ENCODE measurements at regions of chr7 and their contacts with region 1.

Region 1: DNA sequence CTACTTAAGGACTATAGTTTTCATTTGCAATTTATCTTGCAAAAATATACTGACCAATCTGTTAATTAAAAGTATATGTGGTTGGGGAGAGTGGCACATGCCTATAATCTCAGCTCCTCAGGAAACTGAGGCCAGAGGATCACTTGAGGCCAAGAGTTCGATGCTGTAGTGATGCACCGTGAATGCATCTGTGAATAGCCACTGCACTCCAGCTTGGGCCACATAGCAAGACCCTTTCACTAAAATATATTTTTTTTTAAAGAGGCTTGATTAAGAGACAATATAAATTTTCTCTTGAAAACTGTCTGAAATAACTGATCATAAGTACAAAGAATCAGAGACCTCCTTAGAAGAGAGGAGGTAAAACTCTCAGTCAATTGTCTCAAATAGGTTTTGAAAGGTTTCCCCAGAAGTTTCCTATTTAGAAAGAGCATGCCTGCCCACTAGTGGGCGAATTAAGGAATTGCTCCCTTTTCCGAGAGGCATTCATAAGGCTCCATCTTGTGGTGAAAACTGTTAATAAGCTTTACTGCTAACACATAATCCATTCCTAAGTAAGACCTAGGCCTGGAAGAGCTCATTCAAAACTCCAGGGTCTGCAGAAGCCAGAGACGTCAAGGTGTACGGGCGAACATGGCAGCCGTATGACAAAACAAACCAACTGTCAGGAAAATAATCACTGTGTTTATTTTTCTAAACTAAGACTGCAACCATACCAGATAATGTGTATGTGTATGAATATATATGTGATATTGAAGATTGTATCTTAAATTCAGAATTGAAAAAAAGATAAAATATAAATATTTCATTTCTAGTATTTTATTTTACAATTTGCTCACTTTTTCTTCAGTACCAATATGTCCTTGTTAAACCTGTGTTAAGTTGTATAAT is 6.8 kb upstream of the TAS2R40 start:
- DNase-seq: peak; percentile 71
- H3K4me3 ChIP-seq: no peak overlapping the region
- H3K27ac ChIP-seq: no peak overlapping the region
- H3K27me3 ChIP-seq: no peaks in the 10 kb centered on the region
- CTCF ChIP-seq: peak; percentile 100

Region 2: GRCh38 chr7:142992464-142992863 is 222.6 kb before region 1 on chr7:
- CTCF ChIA-PET with region 1: interaction called, 14 read pairs
- POLR2A ChIA-PET with region 1: no interaction called
- DNase-seq: no peak
- H3K4me3 ChIP-seq: no peak overlapping the region
- H3K27ac ChIP-seq: no peak overlapping the region
- H3K27me3 ChIP-seq: no peaks in the 10 kb centered on the region
- CTCF ChIP-seq: no peak

Region 3: GRCh38 chr7:143013893-143014292 is 201.1 kb before region 1 on chr7:
- CTCF ChIA-PET with region 1: interaction called, 406 read pairs
- POLR2A ChIA-PET with region 1: no interaction called
- DNase-seq: peak; percentile 16
- H3K4me3 ChIP-seq: no peak overlapping the region
- H3K27ac ChIP-seq: no peak overlapping the region
- H3K27me3 ChIP-seq: no peaks in the 10 kb centered on the region
- CTCF ChIP-seq: no peak

Region 4: GRCh38 chr7:143042159-143042789 is 172.8 kb before region 1 on chr7:
- CTCF ChIA-PET with region 1: interaction called, 12 read pairs
- POLR2A ChIA-PET with region 1: no interaction called
- DNase-seq: no peak
- H3K4me3 ChIP-seq: no peak overlapping the region
- H3K27ac ChIP-seq: no peak overlapping the region
- H3K27me3 ChIP-seq: no peaks in the 10 kb centered on the region
- CTCF ChIP-seq: no peak

Region 5: GRCh38 chr7:143203386-143203785 is 11.6 kb before region 1 on chr7:
- CTCF ChIA-PET with region 1: interaction called, 33 read pairs
- POLR2A ChIA-PET with region 1: no interaction called
- DNase-seq: no peak
- H3K4me3 ChIP-seq: no peak overlapping the region
- H3K27ac ChIP-seq: no peak overlapping the region
- H3K27me3 ChIP-seq: no peaks in the 10 kb centered on the region
- CTCF ChIP-seq: no peak

Region 6: GRCh38 chr7:143248761-143249354 is 33.8 kb after region 1 on chr7:
- CTCF ChIA-PET with region 1: interaction called, 16 read pairs
- POLR2A ChIA-PET with region 1: no interaction called
- DNase-seq: no peak
- H3K4me3 ChIP-seq: no peak overlapping the region
- H3K27ac ChIP-seq: no peak overlapping the region
- H3K27me3 ChIP-seq: peaks cover 7% of the 10 kb centered on the region
- CTCF ChIP-seq: no peak

Region 7: DNA sequence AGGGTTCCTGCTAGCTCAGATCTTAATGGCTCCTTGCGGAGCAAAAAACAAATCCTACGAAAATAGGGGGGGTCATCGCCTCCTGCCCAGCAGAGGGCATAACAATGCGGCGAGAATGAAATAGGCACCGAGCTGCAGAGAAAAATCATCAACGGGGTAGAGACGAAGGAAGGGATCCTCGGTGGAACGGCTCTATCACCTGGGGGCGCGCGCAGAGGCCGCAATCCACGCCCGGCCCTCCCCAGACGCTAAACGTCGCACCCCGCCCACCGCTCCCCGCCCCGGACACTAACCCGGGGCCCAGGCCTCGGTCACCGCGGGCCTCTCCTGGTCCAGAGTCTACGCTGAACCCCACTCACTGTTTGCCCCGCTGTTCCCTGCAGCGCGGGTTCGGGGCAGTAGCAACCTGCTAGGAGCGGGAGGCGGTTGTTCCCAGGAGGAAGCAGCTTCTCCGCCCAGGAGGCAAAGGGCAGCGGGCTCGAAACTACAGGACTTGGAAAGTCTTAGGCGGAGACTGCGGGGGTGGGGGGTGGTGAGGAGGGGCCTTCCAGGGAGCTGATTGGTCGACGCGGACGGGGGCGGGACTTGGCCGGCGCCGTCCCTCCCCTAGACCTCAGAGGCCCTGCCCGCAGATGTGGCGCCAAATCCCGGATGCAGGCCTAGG is 686.8 kb after region 1 on chr7 and contains the start of gene TCAF1:
- CTCF ChIA-PET with region 1: no interaction called
- POLR2A ChIA-PET with region 1: no interaction called
- DNase-seq: peak; percentile 85
- H3K4me3 ChIP-seq: peak within 1 kb of the TSS; percentile 85
- H3K27ac ChIP-seq: peak within 1 kb of the TSS; percentile 83
- H3K27me3 ChIP-seq: no peaks in the 10 kb centered on the region
- CTCF ChIP-seq: peak; percentile 45
- polyA plus RNA-seq, gene TCAF1: 57.0 and 61.3 TPM in 2 replicates

Region 8: DNA sequence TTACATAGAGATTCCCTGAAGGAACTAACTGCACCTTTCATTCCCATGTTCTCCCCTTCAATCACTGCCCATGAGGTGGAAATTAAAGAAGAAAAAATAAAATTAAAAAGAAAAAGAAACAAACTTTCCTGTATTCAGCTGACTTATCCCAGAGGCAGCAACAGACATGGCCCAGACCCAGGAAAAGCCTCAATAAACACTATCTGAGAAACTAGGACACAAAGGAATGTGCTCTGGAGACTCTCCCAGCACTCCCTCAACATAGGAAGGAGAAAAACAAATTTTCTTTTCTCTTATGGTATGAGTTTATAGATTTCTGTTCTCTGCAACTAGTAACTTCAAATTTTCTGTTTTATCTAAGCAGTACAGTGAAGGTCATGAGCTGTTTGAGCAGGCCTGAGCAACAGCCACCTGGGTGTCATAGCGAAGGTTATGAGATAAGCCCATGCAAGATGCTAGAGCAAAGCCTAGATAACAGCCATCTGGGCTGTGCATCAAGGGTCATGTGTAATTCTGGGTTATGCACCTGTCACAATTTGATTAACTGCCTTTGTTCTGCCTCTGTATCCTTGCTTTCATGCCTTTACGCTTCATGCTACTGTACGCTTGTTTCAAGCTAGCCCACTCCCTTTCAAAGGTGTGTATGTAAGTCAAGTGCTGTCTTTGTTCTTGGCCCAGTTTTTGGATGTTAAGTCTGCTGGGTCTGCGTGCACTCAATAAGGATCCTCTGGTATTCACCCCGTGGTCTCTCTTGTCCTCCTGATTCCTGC is 774.1 kb after region 1 on chr7:
- CTCF ChIA-PET with region 1: no interaction called
- POLR2A ChIA-PET with region 1: no interaction called
- DNase-seq: no peak
- H3K4me3 ChIP-seq: no peak overlapping the region
- H3K27ac ChIP-seq: no peak overlapping the region
- H3K27me3 ChIP-seq: no peaks in the 10 kb centered on the region
- CTCF ChIP-seq: no peak

Region 9: GRCh38 chr7:144148224-144148827 is 933.3 kb after region 1 on chr7:
- CTCF ChIA-PET with region 1: no interaction called
- POLR2A ChIA-PET with region 1: no interaction called
- DNase-seq: no peak
- H3K4me3 ChIP-seq: no peak overlapping the region
- H3K27ac ChIP-seq: no peak overlapping the region
- H3K27me3 ChIP-seq: no peaks in the 10 kb centered on the region
- CTCF ChIP-seq: no peak